ENCODE measurements at regions of chr19 and their contacts with region 1.

Region 1: DNA sequence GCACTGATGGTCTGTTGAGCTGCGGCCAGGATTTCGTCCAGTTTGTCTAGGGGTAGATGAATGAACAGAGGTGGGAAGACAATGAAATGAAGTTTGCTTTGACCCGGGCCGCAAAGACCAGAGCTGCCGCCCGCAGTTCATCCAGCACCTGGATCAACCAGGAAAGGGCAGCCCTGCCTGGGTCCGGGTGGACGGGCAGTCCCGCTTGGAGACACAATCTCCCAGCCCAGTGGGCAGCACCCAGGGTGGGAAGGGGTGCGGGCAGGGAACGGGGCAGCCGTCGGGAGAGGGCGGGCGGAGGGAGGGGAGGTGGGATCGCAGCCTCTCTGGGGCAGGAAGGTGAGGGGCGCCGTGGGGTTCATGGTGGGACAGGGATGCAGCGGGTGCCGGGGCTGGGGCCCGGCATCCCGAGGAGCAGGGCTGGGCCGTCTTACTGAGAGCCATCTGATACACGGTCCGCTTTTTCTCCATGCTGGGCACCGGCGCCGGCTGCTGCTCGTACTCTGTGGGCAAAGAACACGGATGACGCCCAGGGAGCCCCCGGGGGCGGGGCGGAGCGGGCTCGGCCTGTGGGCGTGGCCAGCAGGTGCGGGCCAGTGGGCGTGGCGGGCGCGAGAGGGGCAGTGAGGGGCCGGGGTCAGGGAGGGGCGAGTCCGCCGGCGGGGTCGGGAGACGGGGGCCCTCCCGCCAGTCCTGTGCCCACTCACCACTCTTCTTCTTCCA is 33.1 kb downstream of the SHANK1 start:
- DNase-seq: no peak

Region 2: DNA sequence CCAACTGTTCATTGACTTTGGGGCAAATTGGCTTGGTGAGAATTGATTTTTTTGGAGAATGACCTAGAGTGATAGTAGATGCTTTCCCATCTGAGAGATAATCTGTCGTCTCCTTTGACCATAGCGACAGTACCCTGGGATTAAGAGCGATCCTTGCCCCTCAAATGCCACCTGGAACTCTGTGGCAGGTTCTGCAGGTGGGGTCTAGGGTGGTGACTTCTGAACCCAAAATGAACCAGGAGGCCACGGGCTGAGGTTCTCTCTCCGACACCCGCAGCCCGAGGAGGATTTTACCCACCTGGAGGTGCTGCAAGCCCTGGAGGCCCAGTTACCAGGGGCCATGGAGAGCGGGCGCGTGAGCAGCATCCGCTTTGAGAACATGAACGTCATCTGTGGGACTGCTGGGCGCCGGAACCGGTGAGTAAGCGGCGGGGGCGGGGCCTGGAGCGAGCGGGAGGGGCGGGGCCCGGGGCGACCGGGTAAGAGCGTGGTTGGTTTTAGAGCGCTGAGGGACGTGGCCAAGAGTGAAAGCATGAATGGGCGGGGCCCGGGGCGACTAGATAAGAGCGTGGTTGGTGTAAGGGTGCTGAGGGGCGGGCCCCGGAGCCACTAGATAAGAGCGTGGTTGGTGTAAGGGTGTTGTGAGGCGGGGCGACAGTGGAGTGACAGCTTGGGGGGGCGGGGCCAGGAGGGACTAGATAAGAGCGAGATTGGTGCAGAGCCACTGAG is 28.6 kb before region 1 on chr19:
- intact Hi-C with region 1: no loop called
- DNase-seq: peak; percentile 95

Region 3: GRCh38 chr19:50712833-50713232 is 26.4 kb after region 1 on chr19:
- intact Hi-C with region 1: loop called in 1 of 2 experiments (anchors 1 kb)
- DNase-seq: no peak

Region 4: GRCh38 chr19:50739914-50740426 is 53.5 kb after region 1 on chr19:
- intact Hi-C with region 1: no loop called
- DNase-seq: no peak

Region 5: GRCh38 chr19:50838239-50838883 is 151.9 kb after region 1 on chr19:
- intact Hi-C with region 1: no loop called
- DNase-seq: peak; percentile 60

Region 6: GRCh38 chr19:51837145-51837544 is 1150.7 kb after region 1 on chr19:
- intact Hi-C with region 1: no loop called
- DNase-seq: no peak